Aorta (tissue), 5 donors: ENCODE measurements at regions of chr5 and their contacts with region 1.

Region 1: DNA sequence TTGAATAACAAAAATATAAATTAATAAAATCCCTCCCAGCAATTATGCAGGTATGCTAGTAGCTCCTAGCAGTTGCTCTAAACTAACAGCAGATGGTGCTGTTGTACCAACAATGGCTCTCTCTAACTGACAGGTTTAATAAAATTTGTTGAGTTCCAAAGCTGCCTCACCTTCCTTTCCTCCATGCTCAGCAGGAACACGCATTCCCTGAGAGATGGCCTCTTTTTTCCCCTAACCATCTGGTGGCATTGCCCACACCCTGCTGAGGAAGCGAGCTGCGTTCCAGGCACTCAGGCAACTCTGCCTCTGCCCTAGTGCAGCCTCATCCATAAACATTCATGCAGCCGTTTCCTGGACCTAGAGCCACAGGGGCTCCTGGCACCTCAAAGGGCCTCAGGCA is 106.2 kb downstream of the KLHL3 start:
- DNase-seq: no peak
- ATAC-seq: peak; percentile 84
- H3K4me3 ChIP-seq: no peak overlapping the region
- H3K27ac ChIP-seq: peak overlapping the region; percentile 86 to 98
- H3K4me1 ChIP-seq: peaks cover 2 to 5% of the 10 kb centered on the region in 2 donors
- H3K27me3 ChIP-seq: no peaks in the 10 kb centered on the region

Region 2: DNA sequence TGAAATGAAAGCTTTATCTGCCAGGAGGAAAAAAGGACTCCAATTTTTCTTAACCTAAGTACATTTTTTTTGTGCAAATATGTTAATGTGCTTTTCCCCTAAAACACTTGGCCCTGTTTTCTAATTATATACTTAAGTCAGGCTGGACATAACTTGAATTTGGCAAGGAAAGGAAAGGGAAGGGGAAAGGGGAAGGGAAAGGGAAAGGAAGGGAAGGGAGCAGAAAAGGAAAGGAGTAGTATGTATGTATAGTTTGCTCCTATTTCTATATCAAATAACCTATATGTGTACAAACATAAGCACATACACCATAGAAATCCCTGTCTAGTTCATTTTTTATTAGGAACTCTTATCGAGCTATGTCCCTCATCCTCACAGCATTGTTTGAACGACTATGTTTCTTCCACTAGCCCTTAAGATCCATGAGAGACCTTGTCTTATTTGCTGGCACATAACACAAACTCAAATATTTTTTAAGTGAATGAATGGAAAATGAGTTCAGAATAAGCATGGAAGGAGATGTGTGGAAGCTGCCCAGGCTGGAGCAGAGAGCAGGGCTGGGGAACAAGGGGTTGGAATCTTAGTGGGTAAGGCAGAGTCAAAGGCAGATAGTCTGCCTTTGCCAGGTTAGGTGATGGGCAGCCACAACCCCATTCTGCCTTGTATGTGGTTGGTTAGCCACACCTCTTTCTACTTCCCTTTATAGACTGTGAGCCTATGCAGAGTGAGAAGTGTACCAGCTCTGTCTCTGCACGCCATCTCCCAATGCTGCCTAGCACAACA is 36.2 kb after region 1 on chr5:
- intact Hi-C with region 1: loop called (anchors 5 kb)
- DNase-seq: peak in 1 of 2 donors; percentile 52
- ATAC-seq: peak; percentile 71
- H3K4me3 ChIP-seq: no peak overlapping the region
- H3K27ac ChIP-seq: peak overlapping the region; percentile 69 to 97
- H3K4me1 ChIP-seq: peaks cover 0 to 2% of the 10 kb centered on the region in 2 donors
- H3K27me3 ChIP-seq: no peaks in the 10 kb centered on the region

Region 3: DNA sequence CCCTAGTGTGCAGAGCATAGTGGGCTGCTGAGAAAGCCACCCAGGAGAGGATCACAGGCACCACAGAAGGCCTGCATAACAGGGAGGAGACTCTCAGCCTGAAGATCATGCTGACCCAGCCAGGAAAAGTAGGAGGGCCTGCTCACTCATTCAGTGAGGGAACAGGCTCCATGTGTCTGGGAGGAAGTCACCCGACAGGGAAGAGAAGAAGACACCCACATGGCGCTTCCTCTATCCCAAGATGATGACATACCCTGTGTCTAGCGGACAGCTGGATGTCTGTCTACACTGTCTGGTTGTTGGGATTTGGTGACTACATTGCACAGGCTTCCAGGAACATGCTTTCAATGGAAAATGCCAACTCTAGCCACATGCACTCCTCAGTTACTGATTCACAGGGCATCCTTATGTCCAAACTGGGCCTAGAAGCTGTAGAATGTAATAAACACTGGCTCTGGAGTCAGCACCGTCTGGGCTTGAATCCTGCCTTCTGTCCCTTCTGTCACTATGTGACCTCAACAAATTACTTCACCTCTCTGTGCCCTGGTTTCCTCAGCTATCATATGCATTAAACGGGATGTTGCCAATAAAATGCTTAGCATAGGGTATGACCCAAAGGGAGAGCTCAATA is 58.7 kb after region 1 on chr5:
- intact Hi-C with region 1: no loop called
- DNase-seq: no peak
- ATAC-seq: no peak
- H3K4me3 ChIP-seq: no peak overlapping the region
- H3K27ac ChIP-seq: no peak overlapping the region
- H3K4me1 ChIP-seq: no peaks in the 10 kb centered on the region
- H3K27me3 ChIP-seq: no peaks in the 10 kb centered on the region

Region 4: DNA sequence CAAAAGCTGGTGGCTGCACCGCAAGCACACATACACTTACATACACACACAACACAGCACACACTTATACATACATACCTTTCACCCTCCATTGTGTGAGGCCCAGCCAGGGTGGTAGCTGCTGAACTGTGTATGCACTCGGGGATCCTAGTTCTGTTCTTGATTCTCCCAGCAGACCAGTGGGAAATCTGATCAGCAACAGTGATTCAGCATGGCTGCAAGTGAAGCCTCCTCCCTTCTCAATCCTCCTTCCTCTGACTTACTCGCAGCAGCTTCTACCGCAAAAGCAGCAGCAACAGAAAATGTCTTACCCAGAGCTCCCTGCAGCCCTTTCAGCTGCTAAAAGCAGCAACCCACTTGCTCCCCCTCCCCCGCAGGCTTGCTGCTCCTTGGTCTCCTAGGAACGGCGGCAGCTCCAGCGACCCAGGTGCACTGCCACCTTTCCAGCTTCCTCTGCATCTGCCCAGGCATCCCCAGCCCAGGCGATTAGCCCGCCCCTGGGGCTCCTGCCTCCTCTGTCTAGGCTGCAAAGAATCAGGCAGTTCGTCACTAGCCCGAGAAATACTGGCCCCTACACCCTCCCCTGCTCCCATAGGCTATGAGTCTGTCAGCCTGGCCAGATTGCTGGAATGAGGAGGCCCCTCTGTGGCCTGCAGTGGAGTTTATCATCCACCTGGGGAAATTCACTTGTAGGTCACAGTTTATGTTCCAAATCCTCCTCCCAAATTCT is 106.1 kb after region 1 on chr5 and contains the start of gene KLHL3:
- intact Hi-C with region 1: loop called in 1 of 2 experiments (anchors 2 kb)
- DNase-seq: peak; percentile 53 to 77
- ATAC-seq: peak; percentile 67
- H3K4me3 ChIP-seq: peak within 1 kb of the TSS; percentile 56 to 81
- H3K27ac ChIP-seq: peak within 1 kb of the TSS in 1 of 2 donors; percentile 60
- H3K4me1 ChIP-seq: peaks cover 6 to 11% of the 10 kb centered on the region in 2 donors
- H3K27me3 ChIP-seq: no peaks in the 10 kb centered on the region
- total RNA-seq, gene KLHL3: 20.7 to 38.1 TPM

Region 5: DNA sequence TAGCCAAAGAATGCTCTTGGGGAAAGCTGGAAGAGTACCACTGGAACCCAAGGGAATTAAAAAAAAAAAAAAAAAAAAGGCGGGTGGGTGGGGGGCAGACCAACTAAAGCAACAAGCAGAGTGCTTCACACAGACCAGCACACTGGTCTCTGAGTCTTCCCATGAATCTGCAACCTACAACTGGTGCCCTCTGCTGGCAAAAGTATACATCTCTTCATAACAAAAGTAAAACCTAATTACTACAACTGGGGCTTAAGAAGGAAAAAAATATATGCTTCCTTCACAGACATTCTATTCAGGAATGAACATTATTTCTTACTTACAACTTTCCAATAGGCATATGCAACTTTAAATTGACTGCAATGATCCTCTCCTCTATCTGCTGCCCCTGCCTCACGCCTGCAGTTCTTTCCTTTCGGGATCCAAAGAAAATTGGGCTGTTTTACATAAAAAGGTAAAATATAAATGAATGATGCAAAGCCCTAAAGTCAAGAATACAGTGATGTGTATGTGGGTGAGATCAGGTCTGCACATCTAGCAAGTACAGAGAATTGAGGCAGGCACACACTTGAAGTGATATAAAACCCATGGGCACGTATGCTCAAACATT is 113.5 kb after region 1 on chr5:
- intact Hi-C with region 1: loop called (anchors 2 kb)
- DNase-seq: no peak
- ATAC-seq: peak; percentile 87
- H3K4me3 ChIP-seq: no peak overlapping the region
- H3K27ac ChIP-seq: no peak overlapping the region
- H3K4me1 ChIP-seq: peaks cover 0 to 3% of the 10 kb centered on the region in 2 donors
- H3K27me3 ChIP-seq: no peaks in the 10 kb centered on the region

Region 6: DNA sequence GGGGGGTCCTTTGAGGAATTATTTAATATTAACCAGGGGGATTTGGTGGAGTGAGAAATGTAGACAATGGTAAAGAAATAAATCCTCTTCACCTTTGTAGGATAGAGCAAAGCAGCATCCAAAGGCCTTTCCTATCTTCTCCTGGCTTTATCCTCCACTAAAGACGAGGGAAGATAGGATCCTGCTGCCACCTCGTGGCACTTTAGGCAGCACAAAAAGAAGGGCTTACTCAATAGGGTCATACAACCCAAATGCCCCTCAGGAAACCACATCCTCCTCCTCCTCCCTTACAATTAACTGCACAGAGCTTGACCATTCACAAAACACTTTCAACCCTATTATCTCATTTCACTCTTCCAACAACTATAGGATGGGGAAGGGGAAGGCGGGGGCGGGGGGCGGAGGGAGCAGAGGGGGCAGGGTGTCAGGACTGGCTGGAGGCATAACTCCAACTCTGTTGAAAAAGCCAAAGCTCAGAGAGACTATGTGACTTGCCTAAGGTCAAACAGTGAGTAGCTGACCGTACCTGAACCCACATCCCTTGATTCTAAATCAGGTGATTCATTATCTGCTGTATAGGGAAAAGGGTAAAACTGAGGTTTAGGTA is 192.6 kb after region 1 on chr5:
- intact Hi-C with region 1: loop called (anchors 2 to 10 kb)
- DNase-seq: no peak
- ATAC-seq: peak; percentile 22
- H3K4me3 ChIP-seq: no peak overlapping the region
- H3K27ac ChIP-seq: no peak overlapping the region
- H3K4me1 ChIP-seq: no peaks in the 10 kb centered on the region
- H3K27me3 ChIP-seq: no peaks in the 10 kb centered on the region

Region 7: GRCh38 chr5:137836997-137837396 is 207.4 kb after region 1 on chr5:
- intact Hi-C with region 1: no loop called
- DNase-seq: no peak
- ATAC-seq: peak; percentile 52
- H3K4me3 ChIP-seq: no peak overlapping the region
- H3K27ac ChIP-seq: peak overlapping the region in 1 of 2 donors; percentile 87
- H3K4me1 ChIP-seq: peaks cover 2 to 3% of the 10 kb centered on the region in 2 donors
- H3K27me3 ChIP-seq: no peaks in the 10 kb centered on the region